ENCODE measurements at regions of chr5 and their contacts with region 1.

Region 1: GRCh38 chr5:173204185-173204979 is 30.6 kb downstream of the NKX2-5 start:
- DNase-seq: peak; percentile 63
- ATAC-seq: no peak
- H3K4me3 ChIP-seq: no peak overlapping the region
- H3K27ac ChIP-seq: no peak overlapping the region
- H3K4me1 ChIP-seq: peaks cover 15% of the 10 kb centered on the region
- H3K27me3 ChIP-seq: peaks cover 9% of the 10 kb centered on the region; the same call in 1 of the 2 replicates
- CTCF ChIP-seq: peak; percentile 75

Region 2: DNA sequence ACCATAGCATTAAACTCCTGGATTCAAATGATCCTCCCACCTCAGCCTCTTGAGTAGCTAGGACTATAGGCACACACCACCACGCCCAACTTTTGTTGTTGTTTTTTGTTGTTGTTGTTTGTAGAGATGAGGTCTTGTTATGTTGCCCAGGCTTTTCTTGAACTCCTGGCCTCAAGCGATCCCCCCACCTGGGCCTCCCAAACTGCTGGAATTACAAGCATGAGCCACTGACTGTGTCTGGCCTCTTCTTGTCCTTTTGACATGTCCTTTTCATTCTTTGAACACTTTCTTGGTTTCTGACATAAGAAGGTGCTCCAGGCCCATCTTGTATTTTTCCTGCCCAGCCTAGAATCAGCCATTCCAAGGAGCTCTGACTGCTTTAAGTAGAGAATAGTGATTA is 320.1 kb before region 1 on chr5:
- CTCF ChIA-PET with region 1: interaction called, 14 read pairs
- POLR2A ChIA-PET with region 1: no interaction called
- intact Hi-C with region 1: no loop called
- DNase-seq: no peak
- ATAC-seq: no peak
- H3K4me3 ChIP-seq: no peak overlapping the region
- H3K27ac ChIP-seq: no peak overlapping the region
- H3K4me1 ChIP-seq: peaks cover 22% of the 10 kb centered on the region
- H3K27me3 ChIP-seq: no peaks in the 10 kb centered on the region
- CTCF ChIP-seq: no peak

Region 3: GRCh38 chr5:173165177-173166016 is 39.0 kb before region 1 on chr5:
- CTCF ChIA-PET with region 1: interaction called, 4 read pairs
- POLR2A ChIA-PET with region 1: no interaction called
- intact Hi-C with region 1: loop called (anchors 1 kb)
- DNase-seq: no peak
- ATAC-seq: no peak
- H3K4me3 ChIP-seq: no peak overlapping the region
- H3K27ac ChIP-seq: no peak overlapping the region
- H3K4me1 ChIP-seq: no peaks in the 10 kb centered on the region
- H3K27me3 ChIP-seq: no peaks in the 10 kb centered on the region
- CTCF ChIP-seq: no peak

Region 4: DNA sequence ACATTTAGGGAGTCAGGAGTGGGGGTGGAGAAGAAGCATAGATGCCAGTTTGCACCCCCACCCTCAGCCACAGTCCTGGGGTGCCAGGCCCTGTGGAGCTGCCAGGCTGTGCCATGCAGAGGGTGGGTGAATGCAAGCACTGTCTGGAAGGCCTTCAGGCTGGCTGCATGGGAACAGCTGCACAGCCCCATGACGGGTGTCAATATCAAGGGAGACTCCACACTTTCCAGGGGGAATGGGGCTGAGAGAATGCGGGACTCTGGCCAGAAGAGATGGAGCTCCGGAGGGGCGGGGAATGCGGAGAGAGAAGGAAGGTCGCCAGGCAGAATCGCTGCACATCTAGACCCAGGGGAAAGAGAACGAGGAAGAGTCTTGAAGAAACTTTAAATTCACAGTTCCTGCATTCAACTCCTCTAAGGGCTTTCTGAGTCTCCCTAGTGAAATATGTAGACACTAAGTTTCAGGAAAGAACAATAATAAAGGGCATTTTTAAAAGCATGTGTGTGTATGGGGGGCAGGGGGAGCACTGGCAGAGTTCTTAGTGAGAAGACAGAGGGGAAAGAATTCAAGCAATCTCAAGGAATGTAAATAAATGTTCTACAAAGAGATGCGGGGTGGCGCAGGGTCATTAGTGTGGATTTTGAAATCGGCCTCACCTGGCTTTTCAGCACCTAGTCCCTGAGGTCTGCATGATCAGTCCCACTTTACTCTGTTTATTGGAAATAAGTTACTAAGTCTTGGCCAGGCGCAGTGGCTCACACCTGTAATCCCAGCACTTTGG is 352.9 kb after region 1 on chr5:
- CTCF ChIA-PET with region 1: no interaction called
- POLR2A ChIA-PET with region 1: no interaction called
- intact Hi-C with region 1: no loop called
- DNase-seq: no peak
- ATAC-seq: no peak
- H3K4me3 ChIP-seq: no peak overlapping the region
- H3K27ac ChIP-seq: no peak overlapping the region
- H3K4me1 ChIP-seq: no peaks in the 10 kb centered on the region
- H3K27me3 ChIP-seq: peaks cover 3% of the 10 kb centered on the region; the same call in 1 of the 2 replicates
- CTCF ChIP-seq: no peak

Measured in PC-3 (cell line).